Activated CD4-positive, alpha-beta memory T cell treated with anti-CD3 and anti-CD28 coated beads for 36 hours (primary cell): ENCODE measurements at regions of chr6 and their contacts with region 1.

Region 1: DNA sequence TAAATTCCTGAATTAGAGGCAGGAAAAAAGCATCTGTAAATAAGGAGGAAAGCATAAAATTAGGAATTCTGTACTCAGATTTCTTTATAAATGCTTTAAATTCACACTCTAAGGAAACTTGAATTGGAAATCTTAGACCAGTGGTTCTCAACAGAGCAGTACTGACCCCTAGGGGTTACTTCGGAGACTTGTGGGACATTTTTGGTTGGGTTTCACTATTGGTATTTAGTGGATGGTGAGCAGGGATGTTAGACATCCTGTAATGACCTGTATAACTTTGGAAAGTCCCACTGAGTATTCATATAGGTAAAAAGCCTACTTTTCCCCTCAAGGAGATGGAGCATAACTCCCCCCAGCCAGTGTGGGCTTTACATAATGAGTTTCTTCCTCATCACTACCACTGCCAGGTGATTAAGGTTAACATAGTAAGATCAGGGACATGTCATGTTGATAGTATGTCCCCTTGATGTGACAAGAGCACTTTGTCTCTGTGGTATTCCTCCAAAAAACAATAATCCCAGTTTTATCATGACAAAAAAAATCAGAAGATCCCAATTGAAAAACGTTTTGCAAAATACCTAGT is 31.0 kb downstream of the GLO1 start:
- DNase-seq: peak; percentile 39
- H3K4me3 Mint-ChIP-seq: no peak overlapping the region
- H3K27ac Mint-ChIP-seq: peak overlapping the region; percentile 20
- H3K4me1 Mint-ChIP-seq: peaks cover 38% of the 10 kb centered on the region
- H3K27me3 Mint-ChIP-seq: no peaks in the 10 kb centered on the region

Region 2: DNA sequence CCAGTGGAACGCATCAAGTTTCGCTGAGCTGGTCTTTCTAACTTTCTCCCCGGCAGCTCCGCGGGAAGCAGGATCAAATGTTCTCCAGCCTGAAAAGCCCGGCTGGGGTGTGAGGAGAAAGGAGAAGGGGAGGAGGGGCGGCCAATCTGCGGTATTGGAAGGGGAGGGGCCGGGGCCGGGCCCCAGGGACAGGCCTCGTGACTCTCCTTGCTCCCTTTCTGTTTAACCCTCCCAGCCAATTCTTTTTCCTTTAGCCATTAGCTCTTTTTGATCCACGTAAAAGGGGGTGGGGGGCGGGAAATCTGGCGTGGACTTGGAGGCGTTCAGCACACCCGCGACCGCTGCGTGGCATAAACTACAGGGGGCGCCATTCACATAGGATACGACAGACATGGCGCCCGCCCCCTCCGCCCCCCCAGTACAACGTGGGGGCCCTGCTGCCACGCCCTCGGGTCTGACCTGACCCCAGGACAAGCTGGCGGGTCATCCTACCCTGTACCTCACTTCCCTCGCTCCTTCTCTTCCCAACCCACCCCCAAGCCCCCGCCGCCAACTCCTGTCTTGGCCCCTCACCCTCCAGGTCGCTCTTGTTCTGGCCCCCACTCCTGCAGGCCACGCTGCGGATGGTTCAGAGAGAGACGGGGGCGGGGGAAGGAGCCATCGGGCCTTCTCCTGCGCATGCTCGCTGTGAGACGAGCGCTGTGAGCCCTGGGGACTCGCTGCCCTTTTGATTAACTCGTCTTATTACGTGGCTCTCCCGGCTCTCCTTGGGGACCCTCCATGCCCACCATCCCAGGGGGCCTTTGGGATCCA is 966.5 kb before region 1 on chr6:
- CTCF ChIA-PET with region 1: no interaction called
- POLR2A ChIA-PET with region 1: no interaction called
- intact Hi-C with region 1: loop called (anchors 10 kb)
- DNase-seq: peak; percentile 83
- H3K4me3 Mint-ChIP-seq: peak overlapping the region; percentile 66
- H3K27ac Mint-ChIP-seq: peak overlapping the region; percentile 60
- H3K4me1 Mint-ChIP-seq: peaks cover 9% of the 10 kb centered on the region
- H3K27me3 Mint-ChIP-seq: no peaks in the 10 kb centered on the region

Region 3: DNA sequence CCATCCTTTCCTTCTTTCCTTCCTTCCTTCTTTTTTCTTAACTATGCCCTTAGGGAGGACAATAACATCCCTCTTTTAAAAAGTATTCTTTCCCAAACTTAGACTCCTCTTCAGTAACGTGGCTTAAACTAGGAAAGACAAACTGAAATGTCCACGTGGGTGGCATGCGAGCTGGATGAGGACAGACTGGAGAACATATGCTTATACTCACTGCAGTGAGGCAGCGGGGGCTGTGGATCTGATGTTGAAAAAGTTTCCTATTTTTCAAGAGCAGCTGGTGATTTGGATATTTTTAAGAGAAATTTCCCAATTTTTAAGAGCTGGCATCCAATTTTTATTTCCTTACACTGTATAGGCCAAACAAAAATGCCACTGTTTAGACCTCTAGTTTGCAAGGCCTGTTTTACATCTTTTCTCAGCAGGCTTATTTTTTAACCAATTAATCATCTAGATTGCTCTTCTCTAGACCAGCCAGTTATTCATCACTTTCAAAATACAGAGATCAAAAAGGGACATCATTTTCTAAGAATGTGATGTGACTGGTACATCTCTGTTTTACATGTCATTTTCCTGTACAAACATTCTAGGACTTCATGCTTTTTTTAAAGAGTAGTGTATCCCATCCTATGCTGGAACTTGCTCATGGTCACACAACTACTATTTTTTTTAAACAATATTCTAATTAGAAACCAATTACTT is 258.7 kb before region 1 on chr6:
- CTCF ChIA-PET with region 1: no interaction called
- POLR2A ChIA-PET with region 1: no interaction called
- intact Hi-C with region 1: no loop called
- DNase-seq: peak; percentile 16
- H3K4me3 Mint-ChIP-seq: peak overlapping the region; percentile 33
- H3K27ac Mint-ChIP-seq: peak overlapping the region; percentile 79
- H3K4me1 Mint-ChIP-seq: peaks cover 24% of the 10 kb centered on the region
- H3K27me3 Mint-ChIP-seq: no peaks in the 10 kb centered on the region

Region 4: DNA sequence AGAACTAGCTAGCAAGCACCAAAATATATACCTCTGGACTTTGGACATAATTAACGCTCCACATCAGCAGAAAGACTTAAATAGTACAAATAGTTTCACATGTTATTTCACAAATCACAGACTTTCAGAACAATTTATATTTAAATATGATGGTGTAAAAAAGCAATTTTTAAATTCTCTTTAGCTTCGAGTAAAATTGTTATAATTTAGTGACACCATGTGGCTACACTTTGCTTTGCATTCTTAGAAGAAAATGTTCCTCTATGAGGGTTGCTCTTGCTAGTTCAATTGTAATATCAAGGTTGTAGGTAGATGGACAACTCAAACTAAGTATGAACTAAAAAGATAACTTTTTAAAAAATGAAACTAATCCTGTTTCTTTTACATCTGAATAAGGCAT is 101.2 kb before region 1 on chr6:
- CTCF ChIA-PET with region 1: no interaction called
- POLR2A ChIA-PET with region 1: no interaction called
- intact Hi-C with region 1: loop called (anchors 1 kb)
- DNase-seq: no peak
- H3K4me3 Mint-ChIP-seq: no peak overlapping the region
- H3K27ac Mint-ChIP-seq: no peak overlapping the region
- H3K4me1 Mint-ChIP-seq: peaks cover 23% of the 10 kb centered on the region
- H3K27me3 Mint-ChIP-seq: no peaks in the 10 kb centered on the region

Region 5: GRCh38 chr6:38634518-38634917 is 37.5 kb before region 1 on chr6:
- CTCF ChIA-PET with region 1: no interaction called
- POLR2A ChIA-PET with region 1: no interaction called
- intact Hi-C with region 1: no loop called
- DNase-seq: no peak
- H3K4me3 Mint-ChIP-seq: no peak overlapping the region
- H3K27ac Mint-ChIP-seq: no peak overlapping the region
- H3K4me1 Mint-ChIP-seq: peaks cover 47% of the 10 kb centered on the region
- H3K27me3 Mint-ChIP-seq: no peaks in the 10 kb centered on the region

Region 6: GRCh38 chr6:38684237-38684636 is 12.3 kb after region 1 on chr6:
- CTCF ChIA-PET with region 1: no interaction called
- POLR2A ChIA-PET with region 1: no interaction called
- intact Hi-C with region 1: no loop called
- DNase-seq: no peak
- H3K4me3 Mint-ChIP-seq: no peak overlapping the region
- H3K27ac Mint-ChIP-seq: no peak overlapping the region
- H3K4me1 Mint-ChIP-seq: peaks cover 7% of the 10 kb centered on the region
- H3K27me3 Mint-ChIP-seq: no peaks in the 10 kb centered on the region

Region 7: DNA sequence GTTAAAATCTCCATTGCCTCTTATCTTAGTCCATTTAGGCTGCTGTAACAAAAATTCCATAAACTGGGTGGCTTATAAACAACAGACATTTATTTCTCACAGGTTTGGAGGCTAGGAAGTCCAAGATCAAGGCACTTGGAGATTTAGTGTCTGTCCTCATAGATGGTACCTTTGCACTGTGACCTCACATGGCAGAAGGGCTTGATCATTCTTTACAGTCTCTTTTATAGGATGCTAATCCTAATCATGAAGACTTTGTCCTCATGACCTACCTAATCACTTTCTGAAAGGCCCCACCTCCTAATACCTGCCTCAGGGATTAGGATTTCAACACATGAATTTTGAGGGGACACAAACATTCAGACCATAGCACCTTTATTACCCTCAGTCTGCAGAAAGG is 24.4 kb after region 1 on chr6:
- CTCF ChIA-PET with region 1: no interaction called
- POLR2A ChIA-PET with region 1: no interaction called
- intact Hi-C with region 1: loop called (anchors 2 kb)
- DNase-seq: no peak
- H3K4me3 Mint-ChIP-seq: no peak overlapping the region
- H3K27ac Mint-ChIP-seq: peak overlapping the region; percentile 42
- H3K4me1 Mint-ChIP-seq: peaks cover 51% of the 10 kb centered on the region
- H3K27me3 Mint-ChIP-seq: no peaks in the 10 kb centered on the region

Region 8: DNA sequence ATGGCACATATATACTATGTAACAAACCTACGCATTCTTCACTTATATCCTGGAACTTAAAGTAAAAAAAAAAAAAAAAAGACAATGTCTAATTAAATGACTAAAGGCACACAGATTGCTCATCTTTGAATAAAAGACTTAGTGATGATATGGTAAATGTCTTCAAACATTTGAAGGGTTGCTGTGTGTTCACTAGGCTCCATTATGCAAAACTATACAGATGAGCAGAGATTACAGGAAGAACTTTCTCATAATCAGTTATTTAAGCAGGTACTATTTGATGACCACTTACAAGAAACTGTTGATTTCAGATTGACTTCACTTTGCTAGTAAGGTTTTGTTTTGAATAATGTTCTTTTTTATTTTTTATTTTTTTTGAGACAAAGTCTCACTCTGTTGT is 77.5 kb after region 1 on chr6:
- CTCF ChIA-PET with region 1: no interaction called
- POLR2A ChIA-PET with region 1: no interaction called
- intact Hi-C with region 1: loop called (anchors 2 kb)
- DNase-seq: no peak
- H3K4me3 Mint-ChIP-seq: no peak overlapping the region
- H3K27ac Mint-ChIP-seq: no peak overlapping the region
- H3K4me1 Mint-ChIP-seq: peaks cover 14% of the 10 kb centered on the region
- H3K27me3 Mint-ChIP-seq: peaks cover 19% of the 10 kb centered on the region

Region 9: DNA sequence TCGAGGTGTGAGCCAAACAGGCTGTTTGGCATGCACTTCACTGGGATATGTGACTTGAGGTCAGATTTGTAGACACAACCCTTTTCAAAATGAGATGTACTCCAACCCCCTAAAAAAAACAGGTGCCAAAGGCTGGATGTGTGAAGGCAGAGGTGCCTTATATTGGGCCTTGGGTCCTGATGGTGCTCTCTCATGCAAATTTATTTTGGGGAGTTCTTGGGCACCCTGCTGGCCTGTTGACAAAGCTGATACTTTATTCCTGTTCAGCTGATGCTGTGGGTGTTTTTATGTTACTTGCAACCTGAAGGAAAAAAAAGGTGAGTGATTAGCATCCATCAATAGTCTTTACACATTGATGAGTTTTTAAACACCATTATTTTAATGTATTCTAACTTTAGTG is 164.6 kb after region 1 on chr6:
- CTCF ChIA-PET with region 1: no interaction called
- POLR2A ChIA-PET with region 1: no interaction called
- intact Hi-C with region 1: no loop called
- DNase-seq: no peak
- H3K4me3 Mint-ChIP-seq: no peak overlapping the region
- H3K27ac Mint-ChIP-seq: no peak overlapping the region
- H3K4me1 Mint-ChIP-seq: no peaks in the 10 kb centered on the region
- H3K27me3 Mint-ChIP-seq: peaks cover 2% of the 10 kb centered on the region